Calu3 (cell line): ENCODE measurements at regions of chr5 and their contacts with region 1.

Region 1: GRCh38 chr5:74500110-74500917 is 140.2 kb downstream of the ENC1 start:
- DNase-seq: peak; percentile 21
- H3K4me3 Mint-ChIP-seq: no peak overlapping the region
- H3K27ac Mint-ChIP-seq: peak overlapping the region; percentile 63
- H3K4me1 Mint-ChIP-seq: peaks cover 55% of the 10 kb centered on the region
- H3K27me3 Mint-ChIP-seq: no peaks in the 10 kb centered on the region
- CTCF ChIP-seq: no peak

Region 2: GRCh38 chr5:74326571-74327338 is 173.6 kb before region 1 on chr5:
- CTCF ChIA-PET with region 1: no interaction called
- intact Hi-C with region 1: loop called (anchors 5 kb)
- DNase-seq: peak; percentile 83
- H3K4me3 Mint-ChIP-seq: no peak overlapping the region
- H3K27ac Mint-ChIP-seq: peak overlapping the region; percentile 63
- H3K4me1 Mint-ChIP-seq: peaks cover 44% of the 10 kb centered on the region
- H3K27me3 Mint-ChIP-seq: no peaks in the 10 kb centered on the region
- CTCF ChIP-seq: no peak

Region 3: GRCh38 chr5:74589204-74590056 is 89.1 kb after region 1 on chr5:
- CTCF ChIA-PET with region 1: no interaction called
- intact Hi-C with region 1: loop called (anchors 5 kb)
- DNase-seq: peak; percentile 37
- H3K4me3 Mint-ChIP-seq: peak overlapping the region; percentile 54
- H3K27ac Mint-ChIP-seq: peak overlapping the region; percentile 60
- H3K4me1 Mint-ChIP-seq: peaks cover 67% of the 10 kb centered on the region
- H3K27me3 Mint-ChIP-seq: no peaks in the 10 kb centered on the region
- CTCF ChIP-seq: no peak